ENCODE measurements at regions of chr2 and their contacts with region 1.

Region 1: DNA sequence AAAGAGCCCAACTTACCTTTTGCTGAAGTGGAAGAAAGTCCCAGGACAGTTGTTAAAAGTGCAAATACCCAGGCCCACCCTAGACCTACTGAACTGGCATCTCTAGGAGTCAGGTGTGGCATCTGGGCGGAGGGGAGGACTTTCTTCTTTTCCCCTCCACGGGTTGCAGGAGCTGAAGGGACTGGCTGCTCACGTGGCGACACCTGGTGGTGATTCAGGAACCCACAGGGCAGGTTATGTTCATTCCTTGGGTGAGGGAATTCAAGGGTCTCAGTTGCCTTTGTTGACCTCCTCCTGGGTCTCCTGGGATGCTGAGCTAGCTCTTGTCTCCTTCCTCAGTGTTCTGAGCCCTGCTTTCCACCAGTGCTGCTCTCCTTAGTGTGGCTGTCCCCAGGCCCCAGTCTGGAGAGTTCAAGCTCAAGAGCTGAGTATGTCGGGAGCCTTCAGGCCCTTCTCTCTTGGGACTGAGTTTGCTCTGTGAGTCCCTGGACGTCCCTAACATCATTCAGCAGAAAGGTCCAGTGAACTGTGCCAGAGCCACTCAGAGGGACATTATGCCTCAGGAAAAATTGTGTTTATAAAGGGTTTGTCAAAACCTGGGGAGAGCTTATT is 56.9 kb downstream of the DYSF start:
- DNase-seq: peak; percentile 86
- ATAC-seq: peak; percentile 61
- H3K4me3 Mint-ChIP-seq: no peak overlapping the region
- H3K27ac Mint-ChIP-seq: no peak overlapping the region
- H3K4me1 Mint-ChIP-seq: no peaks in the 10 kb centered on the region
- H3K27me3 Mint-ChIP-seq: peaks cover 4% of the 10 kb centered on the region

Region 2: DNA sequence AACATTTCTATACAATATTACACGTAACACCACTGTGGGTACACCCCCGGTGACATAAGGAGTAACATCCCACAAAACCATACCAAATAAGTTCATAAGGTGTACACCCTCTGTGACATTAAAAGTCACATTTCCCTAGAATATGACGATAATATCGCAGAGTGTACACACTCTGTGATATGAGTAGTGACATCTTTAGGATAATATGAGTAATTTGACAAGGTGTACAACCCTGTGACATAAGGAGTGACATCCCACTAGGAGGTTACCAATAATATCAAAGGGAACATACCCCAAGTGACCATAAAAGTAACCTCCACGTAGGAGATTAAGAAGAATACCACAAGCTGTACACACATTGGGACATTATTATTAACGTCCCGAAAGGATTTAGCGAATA is 491.7 kb before region 1 on chr2:
- CTCF ChIA-PET with region 1: no interaction called
- POLR2A ChIA-PET with region 1: no interaction called
- intact Hi-C with region 1: loop called in 1 of 2 experiments (anchors 1 kb)
- DNase-seq: no peak
- ATAC-seq: peak; percentile 47
- H3K4me3 Mint-ChIP-seq: no peak overlapping the region
- H3K27ac Mint-ChIP-seq: no peak overlapping the region
- H3K4me1 Mint-ChIP-seq: peaks cover 7% of the 10 kb centered on the region
- H3K27me3 Mint-ChIP-seq: peaks cover 2% of the 10 kb centered on the region

Region 3: GRCh38 chr2:71299507-71299906 is 210.8 kb before region 1 on chr2:
- CTCF ChIA-PET with region 1: interaction called, 112 read pairs
- POLR2A ChIA-PET with region 1: no interaction called
- intact Hi-C with region 1: loop called (anchors 1 kb)
- DNase-seq: no peak
- ATAC-seq: no peak
- H3K4me3 Mint-ChIP-seq: no peak overlapping the region
- H3K27ac Mint-ChIP-seq: no peak overlapping the region
- H3K4me1 Mint-ChIP-seq: no peaks in the 10 kb centered on the region
- H3K27me3 Mint-ChIP-seq: no peaks in the 10 kb centered on the region

Region 4: DNA sequence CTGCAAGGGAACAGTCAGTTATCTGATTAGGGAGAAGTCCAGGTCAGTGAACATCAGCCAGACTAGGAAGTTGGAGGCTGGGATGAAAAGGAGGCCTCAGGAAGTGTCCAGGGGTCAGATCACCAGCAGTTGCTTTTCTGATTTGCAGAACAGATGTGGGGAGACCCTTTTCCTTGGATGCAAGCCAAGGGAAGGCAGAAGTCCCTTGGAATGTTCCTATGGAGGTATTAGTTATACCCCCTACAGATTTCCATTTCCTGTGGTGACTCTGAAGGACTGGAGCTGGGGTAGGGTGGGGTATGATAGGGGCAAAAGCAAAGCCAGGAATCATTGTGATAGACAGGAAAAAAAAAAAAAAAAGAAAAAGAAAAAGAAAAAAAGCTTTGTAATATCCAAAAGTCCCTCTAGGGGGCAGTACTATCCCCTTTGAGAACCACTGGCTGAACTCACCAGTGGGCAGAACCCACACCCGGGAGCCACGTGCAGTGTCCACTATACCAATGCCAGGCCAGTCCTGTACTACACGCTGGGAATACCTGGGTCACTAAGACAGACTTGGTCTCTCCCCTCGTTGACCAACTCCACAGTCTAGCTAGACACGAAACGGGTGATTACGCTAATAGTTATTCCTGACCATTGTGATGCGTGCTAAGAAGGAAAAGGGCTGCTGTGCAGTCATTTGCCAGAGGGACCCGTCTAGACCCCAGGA is 49.6 kb before region 1 on chr2:
- CTCF ChIA-PET with region 1: interaction called, 18 read pairs
- POLR2A ChIA-PET with region 1: interaction called, 3 read pairs
- intact Hi-C with region 1: loop called (anchors 2 kb)
- DNase-seq: no peak
- ATAC-seq: no peak
- H3K4me3 Mint-ChIP-seq: no peak overlapping the region
- H3K27ac Mint-ChIP-seq: no peak overlapping the region
- H3K4me1 Mint-ChIP-seq: no peaks in the 10 kb centered on the region
- H3K27me3 Mint-ChIP-seq: peaks cover 8% of the 10 kb centered on the region

Region 5: GRCh38 chr2:71530641-71531332 is 20.5 kb after region 1 on chr2:
- CTCF ChIA-PET with region 1: interaction called, 16 read pairs
- POLR2A ChIA-PET with region 1: no interaction called
- intact Hi-C with region 1: no loop called
- DNase-seq: peak; percentile 46
- ATAC-seq: peak; percentile 65
- H3K4me3 Mint-ChIP-seq: no peak overlapping the region
- H3K27ac Mint-ChIP-seq: no peak overlapping the region
- H3K4me1 Mint-ChIP-seq: peaks cover 2% of the 10 kb centered on the region
- H3K27me3 Mint-ChIP-seq: peaks cover 29% of the 10 kb centered on the region

Measured in activated CD4-positive, alpha-beta T cell treated with anti-CD3 and anti-CD28 coated beads for 36 hours (primary cell).